Head of caudate nucleus (tissue), 42 donors: ENCODE measurements at regions of chr6 and their contacts with region 1.

Region 1: DNA sequence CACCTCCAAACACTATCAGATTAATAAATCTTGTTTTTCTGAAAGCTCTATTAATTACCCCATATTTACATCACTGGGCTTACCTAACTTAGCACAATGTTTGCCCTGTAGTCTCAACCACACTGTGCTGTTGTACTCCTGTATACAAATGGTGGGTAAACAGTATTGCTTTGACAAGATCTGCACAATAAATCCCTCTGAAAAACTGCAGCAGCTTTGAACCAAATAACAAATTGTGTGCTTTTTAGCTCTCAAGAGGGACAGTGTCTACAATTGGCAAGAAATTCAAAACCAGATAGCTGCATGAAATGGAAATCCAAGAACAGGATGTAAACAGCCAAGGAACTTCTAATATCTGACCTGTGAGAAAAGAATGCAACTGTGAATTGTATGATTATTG is 10.4 kb downstream of the KIF6 start:
- DNase-seq: peak in 8 of 42 donors; percentile 18 to 75 (median 48)

Region 2: DNA sequence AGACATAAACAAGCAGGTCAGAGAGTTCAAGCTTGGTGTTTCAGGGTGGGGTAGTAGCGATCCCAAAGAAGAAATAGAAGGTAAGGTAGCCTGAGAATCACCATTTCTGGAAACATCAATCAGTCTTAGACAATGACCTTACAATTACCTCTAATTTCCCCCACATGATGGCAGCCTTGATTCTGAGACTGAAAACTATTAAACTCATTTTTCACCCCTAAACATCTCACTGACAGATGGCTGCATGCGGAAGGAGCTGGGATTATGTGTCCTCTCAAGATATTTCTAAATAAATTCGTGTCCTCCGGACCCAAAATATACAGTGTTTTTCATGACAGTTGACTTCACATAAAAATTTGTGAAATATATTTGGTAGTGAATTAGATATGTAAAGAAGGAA is 50.6 kb before region 1 on chr6:
- intact Hi-C with region 1: loop called (anchors 10 kb)
- DNase-seq: peak in 10 of 42 donors; percentile 13 to 79 (median 55)